GM10248 (cell line): ENCODE measurements at regions of chr1 and their contacts with region 1.

Region 1: GRCh38 chr1:117895482-117896114 is 33.8 kb downstream of the GDAP2 start:
- DNase-seq: peak; percentile 53
- CTCF ChIP-seq: peak; percentile 71

Region 2: GRCh38 chr1:117067533-117068370 is 827.8 kb before region 1 on chr1:
- CTCF ChIA-PET with region 1: interaction called, 26 read pairs
- POLR2A ChIA-PET with region 1: no interaction called
- DNase-seq: peak; percentile 50
- CTCF ChIP-seq: peak; percentile 68

Region 3: GRCh38 chr1:117512743-117513321 is 382.8 kb before region 1 on chr1:
- CTCF ChIA-PET with region 1: interaction called, 28 read pairs
- POLR2A ChIA-PET with region 1: no interaction called
- DNase-seq: no peak
- CTCF ChIP-seq: peak; percentile 51

Region 4: GRCh38 chr1:117879284-117879683 is 16.3 kb before region 1 on chr1:
- CTCF ChIA-PET with region 1: interaction called, 18 read pairs
- POLR2A ChIA-PET with region 1: no interaction called
- DNase-seq: no peak
- CTCF ChIP-seq: no peak

Region 5: DNA sequence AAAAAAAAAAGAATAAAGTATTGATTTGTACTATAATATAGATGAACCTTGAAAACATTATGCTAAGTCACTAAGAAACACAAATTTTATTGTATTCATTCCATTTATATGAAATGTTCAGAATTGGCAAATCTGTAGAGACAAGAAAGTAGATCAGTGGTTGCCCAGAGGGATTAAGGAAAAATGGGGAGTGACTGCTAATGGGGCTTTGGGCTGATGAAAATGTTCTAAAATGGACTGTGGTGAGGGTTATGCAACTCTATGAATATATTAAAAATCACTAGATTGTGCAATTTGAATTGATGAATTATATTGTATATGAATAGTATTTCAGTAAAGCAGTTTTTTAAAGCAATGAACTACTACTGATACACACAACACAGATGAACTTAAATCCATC is 23.8 kb after region 1 on chr1:
- CTCF ChIA-PET with region 1: interaction called, 13 read pairs
- POLR2A ChIA-PET with region 1: no interaction called
- DNase-seq: no peak
- CTCF ChIP-seq: no peak

Region 6: DNA sequence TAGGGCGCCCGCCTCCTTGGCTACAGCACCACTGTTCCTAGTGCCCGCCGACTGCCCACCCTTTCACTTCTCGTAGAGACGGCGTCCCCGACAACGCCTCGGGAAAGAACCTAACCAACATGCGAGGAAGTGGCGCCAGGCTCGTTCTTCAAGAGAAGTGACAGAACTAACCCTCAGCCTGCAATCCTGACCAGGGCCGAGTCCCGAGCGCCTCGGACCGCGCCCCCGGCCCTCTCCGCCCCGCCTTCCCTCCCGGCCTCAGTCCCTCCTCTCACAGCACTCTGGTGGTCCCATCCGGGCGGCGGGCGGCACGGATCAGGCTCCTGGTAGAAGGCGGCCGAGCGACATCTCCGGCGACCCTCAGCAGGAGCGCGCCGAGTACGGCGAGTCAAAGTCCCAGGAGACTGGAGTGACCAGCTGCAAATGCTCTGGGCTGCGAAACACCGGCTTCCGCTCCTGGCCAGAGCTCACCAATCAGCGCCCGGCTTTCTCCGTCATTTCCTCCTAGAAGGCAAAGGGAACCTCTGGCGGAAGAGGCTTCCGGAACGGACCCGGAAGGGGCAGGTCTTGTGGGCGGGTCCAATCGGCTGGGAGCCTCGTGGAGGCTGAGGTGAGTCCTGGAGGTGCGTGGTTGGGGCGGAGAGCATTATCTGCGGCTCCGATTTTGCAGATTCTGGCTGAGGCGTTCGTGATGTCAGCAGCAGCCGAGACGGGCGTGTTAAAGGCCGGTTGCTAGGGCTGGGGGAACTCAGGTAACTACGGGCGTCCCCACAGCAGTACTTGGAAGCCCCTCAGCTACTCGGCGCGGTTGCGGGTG is 33.8 kb after region 1 on chr1 and contains the starts of genes GDAP2 and WDR3:
- CTCF ChIA-PET with region 1: interaction called, 17 read pairs
- POLR2A ChIA-PET with region 1: no interaction called
- DNase-seq: peak; percentile 94
- CTCF ChIP-seq: no peak

Region 7: DNA sequence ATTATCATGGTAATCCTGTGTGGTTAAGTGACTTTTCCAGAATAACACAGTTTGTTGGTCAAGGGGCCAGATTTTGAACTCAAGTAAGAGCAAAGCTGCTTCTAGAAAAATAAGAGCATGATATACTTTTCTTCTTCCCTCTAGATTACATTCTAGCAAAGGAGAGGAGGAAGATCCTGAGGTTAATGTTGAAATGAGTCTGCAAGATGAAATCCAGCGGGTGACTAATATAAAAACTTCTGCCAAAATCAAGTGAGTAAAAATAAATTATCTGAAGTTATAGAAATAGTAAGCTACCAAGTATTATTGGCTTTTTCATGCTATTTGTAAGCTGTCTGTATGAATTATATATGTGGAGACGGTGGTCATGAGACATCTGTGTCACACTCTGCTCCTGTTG is 46.7 kb after region 1 on chr1:
- CTCF ChIA-PET with region 1: interaction called, 10 read pairs
- POLR2A ChIA-PET with region 1: no interaction called
- DNase-seq: no peak
- CTCF ChIP-seq: no peak